ENCODE measurements at regions of chr12 and their contacts with region 1.

Region 1: DNA sequence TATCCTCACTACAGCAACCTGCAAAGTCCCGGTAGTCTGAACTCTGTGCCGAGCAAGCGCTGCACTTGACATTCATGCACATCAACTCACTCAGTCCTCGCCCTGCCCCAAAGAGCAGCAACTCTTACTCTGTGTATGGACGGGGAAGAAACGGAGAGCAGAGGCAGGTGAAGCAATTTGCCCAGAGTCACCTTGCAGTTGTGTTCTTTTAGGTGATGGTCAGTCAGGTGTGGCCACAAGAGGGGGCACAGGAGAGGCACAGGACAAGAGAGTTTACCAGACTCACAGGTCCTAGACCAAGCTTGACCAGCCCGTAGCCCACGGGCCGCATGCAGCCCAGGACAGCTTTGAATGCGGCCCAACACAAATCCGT is 39.1 kb downstream of the TSPAN11 start:
- DNase-seq: no peak
- H3K4me3 ChIP-seq: no peak overlapping the region
- H3K27ac ChIP-seq: no peak overlapping the region
- H3K4me1 ChIP-seq: peaks cover 0 to 4% (median 1%) of the 10 kb centered on the region in 4 donors
- H3K27me3 ChIP-seq: no peaks in the 10 kb centered on the region
- CTCF ChIP-seq: no peak
- EP300 ChIP-seq: no peak
- POLR2A ChIP-seq: no peak

Region 2: DNA sequence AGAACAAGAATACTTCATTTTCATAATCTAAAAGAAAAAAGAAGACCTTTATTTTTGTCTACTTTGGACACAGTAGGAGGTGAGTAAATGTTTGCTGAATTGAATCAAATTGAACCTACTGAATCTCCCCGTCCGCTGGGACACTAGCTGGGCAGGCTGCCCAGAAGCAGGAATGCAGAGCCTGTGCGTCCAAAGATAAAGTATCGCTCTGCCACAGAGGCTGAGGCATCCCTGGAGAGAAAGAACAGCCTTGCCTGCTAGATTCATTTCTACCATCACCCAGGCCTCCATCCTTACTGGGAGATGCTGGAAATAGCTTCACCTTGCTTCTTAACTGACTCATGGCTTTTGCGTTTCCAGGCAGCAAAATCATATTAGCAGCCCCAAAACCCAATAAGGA is 103.1 kb before region 1 on chr12:
- in situ Hi-C with region 1: loop called in 1 of 4 experiments (anchors 25 kb)
- intact Hi-C with region 1: no loop called
- DNase-seq: no peak
- H3K4me3 ChIP-seq: no peak overlapping the region
- H3K27ac ChIP-seq: no peak overlapping the region
- H3K4me1 ChIP-seq: no peaks in the 10 kb centered on the region
- H3K27me3 ChIP-seq: no peaks in the 10 kb centered on the region
- CTCF ChIP-seq: no peak
- EP300 ChIP-seq: no peak
- POLR2A ChIP-seq: no peak